Vagina (tissue), 2 donors: ENCODE measurements at regions of chr6 and their contacts with region 1.

Region 1: GRCh38 chr6:1609648-1610496 is at the start of gene FOXC1:
- DNase-seq: no peak
- H3K4me3 ChIP-seq: peak within 1 kb of the TSS; percentile 59 to 72
- H3K27ac ChIP-seq: peak within 1 kb of the TSS; percentile 79
- H3K4me1 ChIP-seq: peaks cover 56% of the 10 kb centered on the region
- H3K27me3 ChIP-seq: peaks cover 39% of the 10 kb centered on the region
- CTCF ChIP-seq: no peak
- POLR2A ChIP-seq: no peak
- total RNA-seq, gene FOXC1: 9.8 TPM

Region 2: DNA sequence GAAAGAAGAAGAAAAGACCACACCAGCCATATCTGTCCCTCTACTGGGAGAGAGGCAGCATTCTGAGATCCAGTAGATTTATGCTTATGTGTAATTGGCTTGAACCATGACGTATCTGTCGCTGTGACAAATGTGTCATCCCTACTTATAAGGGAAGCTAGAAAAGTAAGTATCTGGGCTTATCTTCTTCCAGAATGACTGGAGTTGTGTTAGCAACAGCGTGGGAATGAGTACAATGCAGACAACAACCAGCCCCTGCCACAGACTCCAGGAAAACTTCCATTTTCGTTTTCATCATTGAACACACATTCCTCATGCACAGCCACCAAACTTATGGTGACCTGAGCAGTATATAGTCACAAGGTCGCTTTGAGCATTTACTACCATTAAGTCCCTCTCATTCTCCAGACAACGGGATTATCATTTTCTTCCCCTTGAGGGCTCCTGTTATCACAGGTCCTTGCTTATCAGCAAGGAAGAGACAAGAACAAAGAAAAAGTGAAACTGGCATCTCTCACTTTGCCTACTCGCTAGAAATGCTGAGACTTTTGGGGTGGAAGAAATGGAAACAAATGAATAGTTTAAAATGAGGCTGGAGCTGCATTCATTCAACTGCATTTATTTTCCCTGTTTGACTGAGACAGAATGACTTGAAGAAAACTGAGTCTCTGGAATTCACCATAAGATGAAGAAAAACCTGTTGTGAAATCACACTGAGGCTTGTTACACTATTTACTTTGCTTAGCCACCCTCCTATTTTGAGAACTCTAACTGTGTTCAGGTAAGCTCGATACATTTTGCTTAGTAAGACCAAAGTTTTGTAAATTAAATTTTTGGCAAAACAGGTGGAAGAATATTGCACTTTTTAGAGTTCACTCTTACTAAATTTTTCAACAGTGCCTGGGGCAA is 447.3 kb before region 1 on chr6:
- intact Hi-C with region 1: no loop called
- DNase-seq: no peak
- H3K4me3 ChIP-seq: no peak overlapping the region
- H3K27ac ChIP-seq: no peak overlapping the region
- H3K4me1 ChIP-seq: no peaks in the 10 kb centered on the region
- H3K27me3 ChIP-seq: no peaks in the 10 kb centered on the region
- CTCF ChIP-seq: no peak
- POLR2A ChIP-seq: no peak

Region 3: DNA sequence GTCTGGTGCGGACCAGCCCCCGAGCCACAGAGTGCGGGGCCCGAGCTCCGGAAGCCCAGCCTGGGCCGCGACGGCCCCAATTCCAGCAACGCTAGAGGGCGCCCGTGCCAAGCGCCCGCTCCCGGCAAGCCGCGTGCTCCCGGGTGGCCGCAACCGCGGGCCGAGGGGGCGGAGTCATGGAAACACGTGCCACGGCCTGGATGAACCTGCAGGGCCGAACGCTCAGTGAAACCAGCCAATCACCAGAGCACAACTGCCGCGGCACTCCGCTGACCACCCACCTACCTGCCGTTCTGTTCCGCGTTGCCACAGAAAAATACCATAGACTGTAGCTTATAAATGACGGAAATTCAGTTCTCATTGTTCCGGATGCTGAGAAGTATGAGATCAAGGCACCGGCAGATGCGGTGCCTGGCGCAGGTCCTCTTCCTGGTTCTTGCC is 85.8 kb before region 1 on chr6:
- intact Hi-C with region 1: no loop called
- DNase-seq: no peak
- H3K4me3 ChIP-seq: no peak overlapping the region
- H3K27ac ChIP-seq: no peak overlapping the region
- H3K4me1 ChIP-seq: peaks cover 23% of the 10 kb centered on the region
- H3K27me3 ChIP-seq: no peaks in the 10 kb centered on the region
- CTCF ChIP-seq: no peak
- POLR2A ChIP-seq: no peak

Region 4: GRCh38 chr6:1686117-1687098 is 76.5 kb after region 1 on chr6:
- intact Hi-C with region 1: loop called (anchors 5 kb)
- DNase-seq: no peak
- H3K4me3 ChIP-seq: no peak overlapping the region
- H3K27ac ChIP-seq: no peak overlapping the region
- H3K4me1 ChIP-seq: peaks cover 12% of the 10 kb centered on the region
- H3K27me3 ChIP-seq: no peaks in the 10 kb centered on the region
- CTCF ChIP-seq: no peak
- POLR2A ChIP-seq: no peak

Region 5: GRCh38 chr6:2103644-2104523 is 494.0 kb after region 1 on chr6:
- intact Hi-C with region 1: loop called (anchors 5 kb)
- DNase-seq: no peak
- H3K4me3 ChIP-seq: no peak overlapping the region
- H3K27ac ChIP-seq: no peak overlapping the region
- H3K4me1 ChIP-seq: no peaks in the 10 kb centered on the region
- H3K27me3 ChIP-seq: no peaks in the 10 kb centered on the region
- CTCF ChIP-seq: peak in 2 of 3 experiments; percentile 9 to 26
- POLR2A ChIP-seq: no peak

Region 6: DNA sequence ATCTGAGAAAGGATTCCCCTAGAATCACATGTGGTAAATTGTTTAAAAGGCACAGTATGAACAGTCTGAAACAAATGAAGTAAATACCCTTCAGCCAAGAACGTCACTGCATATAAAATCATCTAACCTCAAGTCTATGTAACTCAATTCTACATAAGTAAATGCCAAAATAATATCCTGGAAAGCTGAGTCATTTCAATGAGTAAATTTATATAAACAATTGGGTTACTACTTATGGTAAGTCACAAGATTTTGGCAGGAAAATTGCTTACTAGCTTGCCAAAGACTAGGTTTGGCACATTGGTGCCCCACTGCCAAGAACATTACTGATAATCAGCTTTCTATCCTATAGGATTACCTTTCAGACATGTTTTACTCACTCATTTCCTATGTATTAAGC is 627.1 kb after region 1 on chr6:
- intact Hi-C with region 1: loop called (anchors 10 kb)
- DNase-seq: no peak
- H3K4me3 ChIP-seq: no peak overlapping the region
- H3K27ac ChIP-seq: no peak overlapping the region
- H3K4me1 ChIP-seq: no peaks in the 10 kb centered on the region
- H3K27me3 ChIP-seq: no peaks in the 10 kb centered on the region
- CTCF ChIP-seq: no peak
- POLR2A ChIP-seq: no peak

Region 7: GRCh38 chr6:2765166-2765895 is 1155.5 kb after region 1 on chr6 and contains the start of gene WRNIP1:
- intact Hi-C with region 1: loop called (anchors 5 kb)
- DNase-seq: peak in 1 of 2 donors; percentile 100
- H3K4me3 ChIP-seq: peak within 1 kb of the TSS; percentile 78 to 85
- H3K27ac ChIP-seq: peak within 1 kb of the TSS; percentile 92
- H3K4me1 ChIP-seq: peaks cover 45% of the 10 kb centered on the region
- H3K27me3 ChIP-seq: no peaks in the 10 kb centered on the region
- CTCF ChIP-seq: peak; percentile 29 to 55 (median 42)
- POLR2A ChIP-seq: peak in 1 of 2 donors; percentile 81
- total RNA-seq, gene WRNIP1: 50.1 TPM